Dendritic cell treated with granulocyte-macrophage colony-stimulating factor and Interleukin-4, amounts not matched to agents 40 ng/mL and 50 ng/mL, for 4 days (primary cell): ENCODE measurements at regions of chr7 and their contacts with region 1.

Region 1: GRCh38 chr7:37181550-37181932 is 267.1 kb downstream of the ELMO1 start:
- H3K4me3 Mint-ChIP-seq: no peak overlapping the region
- H3K27ac Mint-ChIP-seq: no peak overlapping the region
- H3K4me1 Mint-ChIP-seq: peaks cover 12% of the 10 kb centered on the region
- H3K27me3 Mint-ChIP-seq: no peaks in the 10 kb centered on the region

Region 2: DNA sequence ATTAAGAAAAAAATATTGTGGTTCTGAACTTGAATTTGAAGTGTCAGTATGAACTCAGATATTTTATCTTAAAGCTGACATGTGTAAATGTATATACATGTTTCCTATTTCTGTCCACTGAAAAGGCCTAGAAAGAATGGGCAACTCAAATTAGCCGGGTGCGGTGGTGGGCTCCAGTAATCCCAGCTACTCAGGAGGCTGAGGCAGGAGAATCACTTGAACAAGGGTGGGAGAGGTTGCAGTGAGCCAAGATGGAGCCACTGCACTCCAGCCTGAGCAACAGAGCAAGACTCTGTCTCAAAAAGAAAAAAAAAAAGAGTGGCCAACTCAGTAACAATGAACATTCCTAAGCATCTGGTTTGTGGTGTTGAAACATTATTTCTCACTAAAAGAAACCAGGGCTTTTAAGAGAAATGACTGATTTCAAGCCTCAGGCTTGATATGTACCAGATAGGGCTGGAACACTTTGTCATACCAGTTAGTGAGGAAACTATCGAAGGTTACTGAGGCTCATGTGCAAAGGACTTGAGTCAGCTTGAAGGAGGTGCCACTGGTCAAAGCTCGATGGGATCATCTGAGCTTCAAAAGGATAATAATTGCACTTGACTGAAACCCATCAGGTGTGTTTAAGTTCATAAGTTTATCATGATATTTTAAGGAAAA is 497.7 kb before region 1 on chr7:
- intact Hi-C with region 1: loop called (anchors 5 kb)
- H3K4me3 Mint-ChIP-seq: no peak overlapping the region
- H3K27ac Mint-ChIP-seq: no peak overlapping the region
- H3K4me1 Mint-ChIP-seq: peaks cover 14% of the 10 kb centered on the region
- H3K27me3 Mint-ChIP-seq: no peaks in the 10 kb centered on the region

Region 3: GRCh38 chr7:36871863-36872262 is 309.7 kb before region 1 on chr7:
- intact Hi-C with region 1: loop called (anchors 10 kb)
- H3K4me3 Mint-ChIP-seq: no peak overlapping the region
- H3K27ac Mint-ChIP-seq: no peak overlapping the region
- H3K4me1 Mint-ChIP-seq: peaks cover 7% of the 10 kb centered on the region
- H3K27me3 Mint-ChIP-seq: no peaks in the 10 kb centered on the region

Region 4: DNA sequence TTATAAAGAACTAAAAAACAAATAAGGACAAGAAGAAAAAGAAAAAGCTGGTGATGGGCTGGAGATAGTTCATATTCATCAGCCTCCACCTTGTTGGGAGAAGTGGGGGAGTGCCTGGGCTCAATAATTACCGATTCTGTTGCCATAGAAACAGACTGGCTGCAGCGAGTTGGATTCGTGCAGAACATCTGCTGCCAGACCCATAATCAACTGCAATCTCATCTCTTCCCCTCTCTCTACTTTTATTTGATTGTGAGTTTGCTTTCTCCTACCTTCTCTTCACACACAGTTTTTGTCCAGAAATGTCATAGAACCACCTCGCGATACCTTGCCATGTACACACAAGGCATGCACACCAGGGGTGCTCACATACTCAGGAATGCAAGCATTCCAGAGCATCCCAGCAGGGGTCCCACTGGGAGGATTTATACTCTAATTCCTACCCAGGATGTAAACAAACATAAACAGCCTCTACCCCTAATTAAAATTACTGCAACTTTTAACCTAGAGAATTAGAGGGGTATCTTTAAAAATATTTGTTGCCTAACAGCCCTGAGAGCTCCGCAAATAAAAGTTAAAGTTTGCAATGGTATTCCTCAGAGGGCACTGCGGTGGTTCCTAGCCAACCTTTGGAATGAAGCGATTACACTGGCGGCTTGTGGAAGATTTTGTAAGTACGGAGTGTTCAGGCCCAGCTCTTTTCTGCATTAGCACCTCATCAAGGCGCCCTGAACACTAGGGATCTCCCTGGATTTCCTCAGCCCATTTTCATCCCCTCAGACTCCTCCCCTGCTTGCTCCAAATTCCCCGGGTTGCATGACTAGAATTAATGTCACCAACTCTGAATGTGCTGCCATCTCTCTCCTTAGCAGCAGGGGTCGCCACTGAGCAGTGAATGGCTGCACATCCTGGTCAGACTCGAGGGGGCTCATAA is 194.8 kb before region 1 on chr7:
- intact Hi-C with region 1: loop called (anchors 2 kb)
- H3K4me3 Mint-ChIP-seq: no peak overlapping the region
- H3K27ac Mint-ChIP-seq: no peak overlapping the region
- H3K4me1 Mint-ChIP-seq: peaks cover 30% of the 10 kb centered on the region
- H3K27me3 Mint-ChIP-seq: no peaks in the 10 kb centered on the region